HepG2 (cell line): ENCODE measurements at regions of chr6 and their contacts with region 1.

Region 1: GRCh38 chr6:31862344-31863227 is at the start of gene NEU1:
- DNase-seq: peak; percentile 100
- ATAC-seq: peak; percentile 81
- H3K4me3 ChIP-seq: peak within 1 kb of the TSS; percentile 75 to 99 (median 84)
- H3K27ac ChIP-seq: peak within 1 kb of the TSS; percentile 92
- H3K4me1 ChIP-seq: peaks cover 68% of the 10 kb centered on the region
- H3K27me3 ChIP-seq: no peaks in the 10 kb centered on the region; a peak in 1 of 5 replicates
- CTCF ChIP-seq: peak; percentile 20
- EP300 ChIP-seq: peak in 1 of 2 experiments; percentile 49; a peak in 2 of 4 replicates
- POLR2A ChIP-seq: peak in 1 of 2 experiments; percentile 100; a peak in 2 of 4 replicates
- RAD21 ChIP-seq: peak; percentile 78
- total RNA-seq, gene NEU1: 139 and 297 TPM in 2 replicates

Region 2: DNA sequence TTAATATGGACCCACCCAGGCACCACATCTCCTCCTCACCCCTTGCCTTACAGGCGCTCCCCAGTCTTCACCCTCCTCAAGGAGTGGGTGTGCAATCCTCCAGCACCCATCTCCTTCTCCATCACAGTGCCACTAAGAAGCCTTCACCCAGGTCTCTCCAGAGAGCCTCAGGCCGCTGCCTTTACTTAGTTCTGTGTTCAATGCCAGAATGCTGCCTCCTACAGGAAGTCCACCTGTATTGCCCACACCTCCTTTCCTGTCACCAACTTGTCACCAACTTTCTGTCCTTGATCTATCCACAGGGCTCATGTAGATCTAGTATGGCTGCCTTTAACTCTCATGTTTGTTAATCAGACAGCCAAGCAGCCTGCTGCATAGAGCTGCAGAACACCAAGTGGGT is 277.1 kb before region 1 on chr6:
- CTCF ChIA-PET with region 1: no interaction called
- POLR2A ChIA-PET with region 1: no interaction called
- in situ Hi-C with region 1: no loop called
- intact Hi-C with region 1: no loop called
- DNase-seq: peak; percentile 50
- ATAC-seq: no peak
- H3K4me3 ChIP-seq: no peak overlapping the region
- H3K27ac ChIP-seq: no peak overlapping the region
- H3K4me1 ChIP-seq: peaks cover 20% of the 10 kb centered on the region
- H3K27me3 ChIP-seq: peaks cover 11 to 56% of the 10 kb centered on the region in 2 experiments
- CTCF ChIP-seq: peak; percentile 69
- EP300 ChIP-seq: no peak
- POLR2A ChIP-seq: no peak
- RAD21 ChIP-seq: peak; percentile 23; the same call in 1 of the 2 replicates

Region 3: DNA sequence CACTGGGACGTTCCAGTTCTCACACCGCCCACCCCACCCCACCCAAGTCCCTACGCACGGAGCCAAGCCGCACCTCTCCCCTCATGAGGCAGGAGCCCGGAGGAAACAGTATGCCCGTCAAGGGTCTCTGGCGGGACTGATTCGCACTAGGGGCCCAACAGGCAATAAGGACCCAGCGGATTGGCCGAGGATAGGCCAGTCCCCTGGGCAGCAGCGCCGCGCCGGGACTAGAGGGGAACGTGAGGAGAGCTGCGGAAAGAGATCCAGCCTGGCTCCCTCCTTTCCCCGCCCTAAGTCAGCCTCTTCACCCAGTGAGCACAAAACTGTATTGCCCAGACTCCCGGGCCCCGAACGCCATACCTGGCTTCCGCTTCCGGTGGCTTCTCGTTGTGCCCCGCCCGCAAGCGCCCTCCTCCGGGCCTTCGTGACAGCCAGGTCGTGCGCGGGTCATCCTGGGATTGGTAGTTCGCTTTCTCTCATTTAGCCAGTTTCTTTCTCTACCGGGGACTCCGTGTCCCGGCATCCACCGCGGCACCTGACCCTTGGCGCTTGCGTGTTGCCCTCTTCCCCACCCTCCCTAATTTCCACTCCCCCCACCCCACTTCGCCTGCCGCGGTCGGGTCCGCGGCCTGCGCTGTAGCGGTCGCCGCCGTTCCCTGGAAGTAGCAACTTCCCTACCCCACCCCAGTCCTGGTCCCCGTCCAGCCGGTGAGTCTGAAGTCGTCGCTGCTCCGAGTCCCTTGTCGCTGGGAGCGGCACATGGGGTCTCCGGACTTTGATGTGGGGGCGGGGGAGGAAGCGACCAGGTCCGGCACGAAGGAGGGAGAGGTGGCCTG is 196.9 kb before region 1 on chr6 and contains the start of gene CSNK2B:
- CTCF ChIA-PET with region 1: no interaction called
- POLR2A ChIA-PET with region 1: interaction called, 20 read pairs
- in situ Hi-C with region 1: no loop called
- intact Hi-C with region 1: no loop called
- DNase-seq: peak; percentile 99
- ATAC-seq: peak; percentile 83
- H3K4me3 ChIP-seq: peak within 1 kb of the TSS; percentile 93 to 98 (median 94)
- H3K27ac ChIP-seq: peak within 1 kb of the TSS; percentile 99
- H3K4me1 ChIP-seq: peaks cover 71% of the 10 kb centered on the region
- H3K27me3 ChIP-seq: no peaks in the 10 kb centered on the region; a peak in 1 of 5 replicates
- CTCF ChIP-seq: peak; percentile 21
- EP300 ChIP-seq: 0 out of 4 replicates have a peak, but pooled peaks of 1 of the 2 experiments have one; percentile 1
- POLR2A ChIP-seq: peak in 1 of 2 experiments; percentile 98; a peak in 2 of 4 replicates
- RAD21 ChIP-seq: peak; percentile 8; the same call in 1 of the 2 replicates
- total RNA-seq, gene CSNK2B: 296 and 316 TPM in 2 replicates

Region 4: DNA sequence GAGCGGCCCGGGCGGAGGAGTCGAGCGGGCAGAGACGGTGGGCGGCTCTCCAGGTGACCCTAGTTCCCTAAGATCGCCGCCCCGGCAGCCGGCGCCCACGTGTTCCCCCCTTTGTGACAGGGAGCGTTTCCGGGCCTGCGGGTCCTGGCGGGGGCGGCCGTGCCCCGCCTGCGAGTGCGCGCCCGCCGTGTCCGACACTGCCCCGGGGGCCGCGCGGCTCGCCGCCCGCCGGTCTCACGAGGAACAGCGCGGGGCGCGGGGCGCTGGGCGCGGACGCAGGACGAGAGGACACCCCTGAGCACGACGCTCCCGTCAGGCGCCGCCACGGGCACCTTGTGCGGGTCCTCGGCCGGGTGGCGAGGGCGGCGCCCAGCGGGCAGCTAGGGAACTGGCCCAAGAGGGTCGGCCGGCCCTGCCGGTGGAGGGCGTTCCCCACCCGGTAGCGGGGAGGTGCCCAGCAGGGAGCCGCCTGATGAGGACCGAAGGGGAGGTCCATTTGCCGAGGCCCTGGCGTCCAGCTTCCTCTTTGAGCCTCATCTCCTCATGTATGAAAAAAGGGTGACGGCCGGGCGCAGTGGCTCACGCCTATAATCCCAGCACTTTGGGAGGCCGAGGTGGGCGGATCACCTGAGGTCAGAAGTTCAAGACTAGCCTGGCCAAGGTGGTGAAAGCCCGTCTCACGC is 66.8 kb before region 1 on chr6 and contains the start of gene VARS1:
- CTCF ChIA-PET with region 1: no interaction called
- POLR2A ChIA-PET with region 1: interaction called, 36 read pairs
- in situ Hi-C with region 1: no loop called
- intact Hi-C with region 1: no loop called
- DNase-seq: peak; percentile 90
- ATAC-seq: peak; percentile 89
- H3K4me3 ChIP-seq: peak within 1 kb of the TSS; percentile 89 to 98 (median 98)
- H3K27ac ChIP-seq: peak within 1 kb of the TSS; percentile 76
- H3K4me1 ChIP-seq: peaks cover 25% of the 10 kb centered on the region
- H3K27me3 ChIP-seq: no peaks in the 10 kb centered on the region; a peak in 1 of 5 replicates
- CTCF ChIP-seq: peak; percentile 98
- EP300 ChIP-seq: no peak
- POLR2A ChIP-seq: peak in 1 of 2 experiments; percentile 46; a peak in 1 of 4 replicates
- RAD21 ChIP-seq: peak; percentile 97
- total RNA-seq, gene VARS1: 56.1 and 59.2 TPM in 2 replicates

Region 5: GRCh38 chr6:31827286-31828079 is 35.1 kb before region 1 on chr6 and contains the start of gene HSPA1B:
- CTCF ChIA-PET with region 1: interaction called, 3 read pairs
- POLR2A ChIA-PET with region 1: interaction called, 264 read pairs
- in situ Hi-C with region 1: no loop called
- intact Hi-C with region 1: no loop called
- DNase-seq: peak; percentile 100
- ATAC-seq: peak; percentile 89
- H3K4me3 ChIP-seq: peak within 1 kb of the TSS; percentile 59 to 91 (median 86)
- H3K27ac ChIP-seq: peak within 1 kb of the TSS; percentile 68
- H3K4me1 ChIP-seq: peaks cover 44% of the 10 kb centered on the region
- H3K27me3 ChIP-seq: no peaks in the 10 kb centered on the region; a peak in 1 of 5 replicates
- CTCF ChIP-seq: peak; percentile 29
- EP300 ChIP-seq: peak in 1 of 2 experiments; percentile 82; a peak in 2 of 4 replicates
- POLR2A ChIP-seq: peak; percentile 100
- RAD21 ChIP-seq: peak; percentile 76
- total RNA-seq, gene HSPA1B: 186 and 189 TPM in 2 replicates

Region 6: DNA sequence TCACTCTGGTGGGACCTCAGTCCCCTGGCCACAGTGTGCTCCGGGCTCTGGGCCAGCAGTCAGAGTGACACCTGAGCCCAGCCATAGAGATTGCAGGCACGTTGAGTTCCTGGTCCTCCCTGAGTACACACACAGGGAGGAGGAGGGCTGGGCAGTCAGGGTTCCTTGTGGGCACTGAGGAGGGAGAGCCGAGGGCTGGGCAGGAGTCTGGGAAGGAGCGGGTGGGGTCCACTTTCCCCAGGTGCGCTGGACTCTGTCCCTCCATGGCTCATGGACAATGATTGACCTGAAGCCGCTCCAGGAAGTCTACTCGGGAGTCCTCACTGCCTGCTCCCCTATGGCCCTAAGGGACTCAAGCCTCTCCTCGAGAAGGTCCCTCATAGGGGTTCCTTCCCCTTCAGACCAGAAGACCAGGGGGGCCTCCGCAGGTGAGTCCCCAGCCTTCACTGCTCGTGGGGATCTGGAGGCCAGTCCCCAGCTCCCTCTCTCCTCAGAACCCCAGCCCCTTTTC is 15.1 kb after region 1 on chr6:
- CTCF ChIA-PET with region 1: no interaction called
- POLR2A ChIA-PET with region 1: interaction called, 103 read pairs
- in situ Hi-C with region 1: no loop called
- intact Hi-C with region 1: loop called (anchors 1 kb)
- DNase-seq: peak; percentile 77
- ATAC-seq: peak; percentile 93
- H3K4me3 ChIP-seq: peak overlapping the region; percentile 42 to 72 (median 46)
- H3K27ac ChIP-seq: no peak overlapping the region
- H3K4me1 ChIP-seq: peaks cover 41% of the 10 kb centered on the region
- H3K27me3 ChIP-seq: no peaks in the 10 kb centered on the region
- CTCF ChIP-seq: peak; percentile 30; the same call in 1 of the 2 replicates
- EP300 ChIP-seq: no peak
- POLR2A ChIP-seq: peak in 1 of 2 experiments; percentile 53; a peak in 2 of 4 replicates
- RAD21 ChIP-seq: 0 out of 2 replicates have a peak, but pooled peaks have one; percentile 17

Region 7: GRCh38 chr6:31945507-31946369 is 83.2 kb after region 1 on chr6 and contains the start of gene CFB:
- CTCF ChIA-PET with region 1: no interaction called
- POLR2A ChIA-PET with region 1: interaction called, 61 read pairs
- in situ Hi-C with region 1: no loop called
- intact Hi-C with region 1: no loop called
- DNase-seq: peak; percentile 100
- ATAC-seq: peak; percentile 95
- H3K4me3 ChIP-seq: peak within 1 kb of the TSS; percentile 59 to 90 (median 66)
- H3K27ac ChIP-seq: peak within 1 kb of the TSS; percentile 91
- H3K4me1 ChIP-seq: peaks cover 85% of the 10 kb centered on the region
- H3K27me3 ChIP-seq: no peaks in the 10 kb centered on the region; a peak in 1 of 5 replicates
- CTCF ChIP-seq: peak; percentile 8; the same call in 1 of the 2 replicates
- EP300 ChIP-seq: peak; percentile 89 to 94; a peak in 3 of 4 replicates
- POLR2A ChIP-seq: peak in 1 of 2 experiments; percentile 96; a peak in 2 of 4 replicates
- RAD21 ChIP-seq: peak; percentile 40
- total RNA-seq, gene CFB: 71.1 and 171 TPM in 2 replicates

Region 8: GRCh38 chr6:31971993-31972708 is 109.6 kb after region 1 on chr6 and contains the start of gene DXO:
- CTCF ChIA-PET with region 1: no interaction called
- POLR2A ChIA-PET with region 1: interaction called, 11 read pairs
- in situ Hi-C with region 1: no loop called
- intact Hi-C with region 1: no loop called
- DNase-seq: peak; percentile 98
- ATAC-seq: peak; percentile 86
- H3K4me3 ChIP-seq: peak within 1 kb of the TSS; percentile 73 to 94 (median 90)
- H3K27ac ChIP-seq: peak within 1 kb of the TSS; percentile 86
- H3K4me1 ChIP-seq: peaks cover 32% of the 10 kb centered on the region
- H3K27me3 ChIP-seq: no peaks in the 10 kb centered on the region; a peak in 1 of 5 replicates
- CTCF ChIP-seq: peak; percentile 17; the same call in 1 of the 2 replicates
- EP300 ChIP-seq: peak in 1 of 2 experiments; percentile 58; a peak in 1 of 4 replicates
- POLR2A ChIP-seq: peak; percentile 52 to 60; a peak in 3 of 4 replicates
- RAD21 ChIP-seq: peak; percentile 58
- total RNA-seq, gene DXO: 10.8 and 18.6 TPM in 2 replicates